HCT116 (cell line): ENCODE measurements at regions of chr14 and their contacts with region 1.

Region 1: DNA sequence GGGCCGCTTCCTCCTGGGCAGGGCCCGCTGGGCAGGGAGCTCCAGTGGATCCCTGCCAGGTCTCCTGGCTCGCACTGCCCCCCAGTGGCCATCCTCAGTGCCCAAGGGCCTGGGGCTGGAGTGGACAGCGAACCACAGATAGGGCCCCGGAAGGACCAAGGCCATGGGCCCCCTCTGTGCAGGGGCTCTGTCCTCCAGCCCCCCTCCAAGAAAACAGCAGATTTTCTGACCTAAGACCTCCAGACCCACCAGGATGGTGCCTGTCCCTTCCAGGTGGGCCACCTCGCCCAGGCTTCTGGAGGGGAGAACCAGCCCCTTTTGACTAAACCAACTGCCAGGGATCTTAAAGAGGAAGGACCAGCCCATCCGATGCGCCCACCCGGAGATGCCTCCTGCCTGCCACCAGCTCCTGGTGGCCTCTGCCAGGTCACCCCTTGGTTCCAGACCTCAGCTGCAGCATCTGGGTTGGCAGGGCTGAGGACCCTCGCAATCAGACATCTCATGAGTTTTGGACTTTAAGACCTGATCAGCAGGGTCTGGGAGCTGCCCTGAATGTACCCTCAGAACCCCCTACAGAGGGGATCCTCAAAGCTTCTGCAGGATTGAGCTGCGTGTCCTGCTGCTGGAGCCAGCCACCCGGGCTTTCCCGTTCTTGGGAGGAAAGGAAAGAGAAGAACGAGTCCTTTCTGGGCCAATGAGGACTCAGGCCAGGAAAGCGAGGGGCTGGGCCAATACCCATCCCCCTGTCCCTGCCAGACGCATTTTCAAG is 325.8 kb upstream of the DIO3 start:
- DNase-seq: peak; percentile 26
- ATAC-seq: peak; percentile 99
- H3K4me3 ChIP-seq: no peak overlapping the region
- H3K27ac ChIP-seq: no peak overlapping the region
- H3K4me1 ChIP-seq: no peaks in the 10 kb centered on the region
- H3K27me3 ChIP-seq: no peaks in the 10 kb centered on the region
- CTCF ChIP-seq: peak; percentile 86 to 92 (median 88)
- POLR2A ChIP-seq: no peak
- RAD21 ChIP-seq: peak; percentile 98

Region 2: GRCh38 chr14:100662879-100663760 is 572.4 kb before region 1 on chr14:
- CTCF ChIA-PET with region 1: no interaction called
- POLR2A ChIA-PET with region 1: no interaction called
- RAD21 ChIA-PET with region 1: no interaction called
- intact Hi-C with region 1: loop called (anchors 1 kb)
- DNase-seq: peak; percentile 87
- ATAC-seq: peak; percentile 78
- H3K4me3 ChIP-seq: peak overlapping the region; percentile 28 to 51
- H3K27ac ChIP-seq: peak overlapping the region; percentile 46
- H3K4me1 ChIP-seq: peaks cover 4 to 65% of the 10 kb centered on the region in 2 experiments; a peak in 3 of 4 replicates
- H3K27me3 ChIP-seq: no peaks in the 10 kb centered on the region
- CTCF ChIP-seq: peak in 2 of 3 experiments; percentile 90 to 98; a peak in 4 of 6 replicates
- POLR2A ChIP-seq: no peak
- RAD21 ChIP-seq: no peak

Region 3: DNA sequence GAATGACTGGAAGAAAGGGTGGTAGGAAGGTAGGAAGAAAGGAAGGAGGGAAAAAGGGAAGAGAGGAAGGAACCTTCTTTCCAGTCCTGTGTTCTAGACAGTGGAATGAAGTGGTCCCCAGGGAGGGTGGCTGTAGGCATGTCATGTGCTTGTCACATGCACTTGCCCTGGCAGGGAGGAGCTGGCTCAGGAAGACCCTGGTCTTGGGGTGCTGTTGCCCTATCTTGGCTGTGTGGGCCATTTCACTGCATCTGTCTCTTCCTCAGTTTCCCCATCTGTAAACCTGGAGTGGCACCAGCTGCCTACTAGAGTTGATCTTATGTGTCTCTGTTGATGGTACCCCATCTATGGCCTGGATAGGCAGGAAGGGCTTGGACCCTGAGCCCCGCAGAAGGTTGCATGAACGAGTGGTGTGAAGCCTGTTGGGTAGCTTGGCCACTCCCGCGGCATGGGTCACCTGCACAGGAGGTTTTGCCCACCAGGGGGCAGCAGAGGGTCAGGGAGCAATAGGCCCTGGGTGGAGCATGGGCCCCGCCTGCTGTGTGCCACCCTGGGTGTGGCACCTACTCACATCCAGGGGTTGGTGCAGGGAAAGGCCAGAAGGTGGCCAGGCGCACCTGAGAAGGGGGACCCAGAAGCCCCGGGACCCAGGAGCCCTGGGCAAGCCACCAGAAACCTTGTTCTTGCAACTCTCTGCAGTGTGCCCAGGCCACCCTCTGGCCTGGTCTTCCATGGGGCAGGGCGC is 384.5 kb before region 1 on chr14:
- CTCF ChIA-PET with region 1: interaction called, 9 read pairs
- POLR2A ChIA-PET with region 1: no interaction called
- RAD21 ChIA-PET with region 1: interaction called in 1 of 2 experiments, 3 read pairs
- intact Hi-C with region 1: loop called (anchors 1 kb)
- DNase-seq: peak; percentile 74
- ATAC-seq: peak; percentile 100
- H3K4me3 ChIP-seq: no peak overlapping the region
- H3K27ac ChIP-seq: no peak overlapping the region
- H3K4me1 ChIP-seq: peaks cover 0 to 17% of the 10 kb centered on the region in 2 experiments; a peak in 3 of 4 replicates
- H3K27me3 ChIP-seq: no peaks in the 10 kb centered on the region
- CTCF ChIP-seq: peak; percentile 94 to 97 (median 97)
- POLR2A ChIP-seq: no peak
- RAD21 ChIP-seq: peak; percentile 97

Region 4: GRCh38 chr14:100900837-100901390 is 334.6 kb before region 1 on chr14:
- CTCF ChIA-PET with region 1: interaction called, 19 read pairs
- POLR2A ChIA-PET with region 1: no interaction called
- RAD21 ChIA-PET with region 1: interaction called, 5 to 6 read pairs
- intact Hi-C with region 1: loop called (anchors 1 kb)
- DNase-seq: peak; percentile 41
- ATAC-seq: peak; percentile 88
- H3K4me3 ChIP-seq: no peak overlapping the region
- H3K27ac ChIP-seq: no peak overlapping the region
- H3K4me1 ChIP-seq: peaks cover 0 to 7% of the 10 kb centered on the region in 2 experiments; a peak in 1 of 4 replicates
- H3K27me3 ChIP-seq: 0 out of 2 replicates have a peak, but pooled peaks cover 3% of the 10 kb centered on the region
- CTCF ChIP-seq: peak; percentile 65 to 92 (median 78)
- POLR2A ChIP-seq: no peak
- RAD21 ChIP-seq: peak; percentile 97

Region 5: DNA sequence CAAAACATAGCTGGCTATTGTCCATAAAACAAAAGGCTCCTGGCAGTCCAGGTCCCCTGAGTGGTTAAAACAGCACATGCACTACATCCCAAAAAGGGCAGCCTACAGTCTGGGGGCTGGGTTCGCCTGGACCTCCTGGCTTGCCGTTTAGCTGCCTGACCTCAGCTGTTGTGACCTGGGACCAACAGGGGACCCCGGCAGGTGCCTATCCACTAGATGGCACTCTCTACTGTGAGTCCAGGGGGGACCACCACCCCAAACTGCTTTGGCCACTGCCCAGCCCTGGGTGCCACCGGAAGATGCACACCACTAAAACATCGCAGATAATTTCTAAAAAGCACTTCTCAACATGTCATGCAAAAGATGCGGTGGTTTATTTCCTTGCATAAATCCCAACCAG is 329.1 kb before region 1 on chr14:
- CTCF ChIA-PET with region 1: interaction called, 19 read pairs
- POLR2A ChIA-PET with region 1: no interaction called
- RAD21 ChIA-PET with region 1: interaction called, 5 to 6 read pairs
- intact Hi-C with region 1: loop called (anchors 1 kb)
- DNase-seq: no peak
- ATAC-seq: no peak
- H3K4me3 ChIP-seq: no peak overlapping the region
- H3K27ac ChIP-seq: no peak overlapping the region
- H3K4me1 ChIP-seq: no peaks in the 10 kb centered on the region
- H3K27me3 ChIP-seq: 0 out of 2 replicates have a peak, but pooled peaks cover 6% of the 10 kb centered on the region
- CTCF ChIP-seq: peak; percentile 56 to 69 (median 57); a peak in 5 of 6 replicates
- POLR2A ChIP-seq: no peak
- RAD21 ChIP-seq: peak; percentile 88

Region 6: GRCh38 chr14:101601606-101602465 is 366.3 kb after region 1 on chr14:
- CTCF ChIA-PET with region 1: no interaction called
- POLR2A ChIA-PET with region 1: no interaction called
- RAD21 ChIA-PET with region 1: no interaction called
- intact Hi-C with region 1: no loop called
- DNase-seq: no peak
- ATAC-seq: no peak
- H3K4me3 ChIP-seq: no peak overlapping the region
- H3K27ac ChIP-seq: no peak overlapping the region
- H3K4me1 ChIP-seq: no peaks in the 10 kb centered on the region
- H3K27me3 ChIP-seq: peaks cover 10% of the 10 kb centered on the region
- CTCF ChIP-seq: no peak
- POLR2A ChIP-seq: no peak
- RAD21 ChIP-seq: no peak

Region 7: GRCh38 chr14:101628471-101628966 is 393.0 kb after region 1 on chr14:
- CTCF ChIA-PET with region 1: no interaction called
- POLR2A ChIA-PET with region 1: no interaction called
- RAD21 ChIA-PET with region 1: no interaction called
- intact Hi-C with region 1: loop called (anchors 2 kb)
- DNase-seq: peak; percentile 31
- ATAC-seq: peak; percentile 95
- H3K4me3 ChIP-seq: no peak overlapping the region
- H3K27ac ChIP-seq: peak overlapping the region; percentile 24; the same call in 1 of the 2 replicates
- H3K4me1 ChIP-seq: peaks cover 7 to 9% of the 10 kb centered on the region in 2 experiments; a peak in 3 of 4 replicates
- H3K27me3 ChIP-seq: no peaks in the 10 kb centered on the region
- CTCF ChIP-seq: peak; percentile 73 to 79 (median 79)
- POLR2A ChIP-seq: no peak
- RAD21 ChIP-seq: peak; percentile 97

Region 8: GRCh38 chr14:101665515-101666078 is 430.1 kb after region 1 on chr14:
- CTCF ChIA-PET with region 1: no interaction called
- POLR2A ChIA-PET with region 1: no interaction called
- RAD21 ChIA-PET with region 1: no interaction called
- intact Hi-C with region 1: loop called (anchors 2 kb)
- DNase-seq: peak; percentile 57
- ATAC-seq: peak; percentile 98
- H3K4me3 ChIP-seq: no peak overlapping the region
- H3K27ac ChIP-seq: no peak overlapping the region
- H3K4me1 ChIP-seq: no peaks in the 10 kb centered on the region
- H3K27me3 ChIP-seq: no peaks in the 10 kb centered on the region
- CTCF ChIP-seq: peak; percentile 67 to 76 (median 69); a peak in 5 of 6 replicates
- POLR2A ChIP-seq: no peak
- RAD21 ChIP-seq: peak; percentile 90